ENCODE measurements at regions of chr5 and their contacts with region 1.

Region 1: GRCh38 chr5:150469718-150470469 is 20.4 kb upstream of the RPS14 start:
- DNase-seq: peak; percentile 80
- H3K4me3 ChIP-seq: no peak overlapping the region
- H3K27ac ChIP-seq: no peak overlapping the region
- H3K4me1 ChIP-seq: peaks cover 38% of the 10 kb centered on the region
- H3K27me3 ChIP-seq: no peaks in the 10 kb centered on the region
- CTCF ChIP-seq: no peak

Region 2: GRCh38 chr5:150357326-150358260 is 112.3 kb before region 1 on chr5 and contains the start of gene TCOF1:
- CTCF ChIA-PET with region 1: no interaction called
- dilution Hi-C with region 1: no loop called
- in situ Hi-C with region 1: no loop called
- intact Hi-C with region 1: no loop called
- DNase-seq: peak; percentile 96
- H3K4me3 ChIP-seq: peak within 1 kb of the TSS; percentile 83 to 88 (median 85)
- H3K27ac ChIP-seq: peak within 1 kb of the TSS; percentile 83
- H3K4me1 ChIP-seq: peaks cover 9% of the 10 kb centered on the region
- H3K27me3 ChIP-seq: no peaks in the 10 kb centered on the region
- CTCF ChIP-seq: no peak
- total RNA-seq, gene TCOF1: 17.7 to 70.4 TPM

Region 3: GRCh38 chr5:150449517-150450339 is 20.2 kb before region 1 on chr5 and contains the start of gene RPS14:
- CTCF ChIA-PET with region 1: no interaction called
- dilution Hi-C with region 1: no loop called
- in situ Hi-C with region 1: no loop called
- intact Hi-C with region 1: no loop called
- DNase-seq: peak; percentile 94
- H3K4me3 ChIP-seq: peak within 1 kb of the TSS; percentile 79 to 86 (median 79)
- H3K27ac ChIP-seq: peak within 1 kb of the TSS; percentile 88
- H3K4me1 ChIP-seq: peaks cover 17% of the 10 kb centered on the region
- H3K27me3 ChIP-seq: no peaks in the 10 kb centered on the region
- CTCF ChIP-seq: peak; percentile 80 to 86
- total RNA-seq, gene RPS14: 1,819 to 2,158 TPM

Region 4: DNA sequence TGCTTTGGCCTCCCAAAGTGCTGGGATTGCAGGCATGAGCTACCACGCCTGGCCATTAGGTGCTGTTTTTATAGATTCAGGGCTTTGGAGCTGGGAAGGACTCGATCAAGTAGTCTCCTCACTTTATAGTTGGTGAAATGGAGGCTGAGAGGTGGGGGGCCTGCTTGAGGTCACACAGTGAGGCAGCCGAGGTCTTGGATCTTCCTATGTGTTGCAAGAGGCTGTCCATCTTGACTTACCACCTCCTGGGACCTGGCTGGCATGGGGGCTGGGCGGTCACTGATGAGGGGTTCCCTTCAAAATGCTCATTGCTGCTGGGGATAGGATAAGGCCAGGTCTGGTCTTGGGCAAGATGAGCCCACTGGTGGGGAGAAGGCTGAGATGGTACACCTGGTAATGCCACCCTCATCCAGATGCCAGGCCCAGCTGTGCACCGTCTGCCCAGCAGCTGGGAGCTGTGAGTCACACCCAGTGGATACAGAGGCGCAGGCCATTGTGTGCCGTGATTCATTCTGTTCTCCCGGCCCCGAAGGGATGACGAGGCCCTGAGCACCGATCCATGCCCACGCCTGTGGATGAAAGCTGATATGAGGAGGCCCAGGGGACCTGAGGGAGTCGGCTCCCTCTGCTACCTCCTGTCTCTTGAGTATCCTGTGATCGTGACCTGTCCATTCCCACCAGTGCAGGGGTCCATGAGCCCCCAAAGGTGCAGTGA is 27.5 kb after region 1 on chr5:
- CTCF ChIA-PET with region 1: no interaction called
- dilution Hi-C with region 1: no loop called
- in situ Hi-C with region 1: no loop called
- intact Hi-C with region 1: loop called (anchors 1 kb)
- DNase-seq: peak; percentile 96
- H3K4me3 ChIP-seq: peak overlapping the region; percentile 22 to 41 (median 35)
- H3K27ac ChIP-seq: peak overlapping the region; percentile 77
- H3K4me1 ChIP-seq: peaks cover 71% of the 10 kb centered on the region
- H3K27me3 ChIP-seq: no peaks in the 10 kb centered on the region
- CTCF ChIP-seq: no peak

Region 5: GRCh38 chr5:150523472-150524350 is 53.8 kb after region 1 on chr5:
- CTCF ChIA-PET with region 1: no interaction called
- dilution Hi-C with region 1: no loop called
- in situ Hi-C with region 1: no loop called
- intact Hi-C with region 1: loop called (anchors 5 kb)
- DNase-seq: peak; percentile 39
- H3K4me3 ChIP-seq: no peak overlapping the region
- H3K27ac ChIP-seq: no peak overlapping the region
- H3K4me1 ChIP-seq: peaks cover 42% of the 10 kb centered on the region
- H3K27me3 ChIP-seq: no peaks in the 10 kb centered on the region
- CTCF ChIP-seq: peak; percentile 44 to 59

Region 6: DNA sequence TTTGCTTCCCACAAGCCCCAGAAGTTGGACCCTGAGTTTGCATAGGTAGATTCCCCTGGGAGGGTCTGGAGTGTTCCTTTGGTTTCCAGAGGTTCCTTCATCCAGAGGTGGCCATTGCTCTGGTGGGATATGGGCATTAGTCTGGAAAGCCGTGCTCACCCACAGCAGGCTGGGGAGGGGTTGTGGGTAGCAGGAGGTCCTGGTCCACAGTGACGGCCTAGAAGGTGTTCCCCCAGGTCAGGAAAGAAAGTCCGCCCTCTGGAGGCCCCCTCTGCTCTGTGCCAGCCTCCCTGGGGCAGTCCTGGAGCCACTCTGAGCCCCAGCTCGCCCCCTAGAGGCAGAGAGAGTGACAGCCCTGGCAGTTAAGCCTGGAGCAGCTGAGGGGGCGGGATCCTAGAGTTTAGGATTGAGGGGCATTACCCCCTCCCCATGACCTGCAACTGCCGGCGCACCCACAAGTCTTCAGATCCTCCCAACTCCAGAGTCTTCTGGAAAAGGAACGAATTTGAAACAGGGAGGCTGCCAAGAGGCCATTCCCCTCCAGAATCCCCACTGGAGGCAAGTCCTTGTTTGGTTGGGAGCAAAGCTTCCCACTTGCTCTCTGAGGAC is 74.8 kb after region 1 on chr5:
- CTCF ChIA-PET with region 1: no interaction called
- dilution Hi-C with region 1: no loop called
- in situ Hi-C with region 1: no loop called
- intact Hi-C with region 1: loop called (anchors 2 kb)
- DNase-seq: peak; percentile 44
- H3K4me3 ChIP-seq: no peak overlapping the region
- H3K27ac ChIP-seq: no peak overlapping the region
- H3K4me1 ChIP-seq: peaks cover 27% of the 10 kb centered on the region
- H3K27me3 ChIP-seq: no peaks in the 10 kb centered on the region
- CTCF ChIP-seq: peak; percentile 74 to 94

Region 7: DNA sequence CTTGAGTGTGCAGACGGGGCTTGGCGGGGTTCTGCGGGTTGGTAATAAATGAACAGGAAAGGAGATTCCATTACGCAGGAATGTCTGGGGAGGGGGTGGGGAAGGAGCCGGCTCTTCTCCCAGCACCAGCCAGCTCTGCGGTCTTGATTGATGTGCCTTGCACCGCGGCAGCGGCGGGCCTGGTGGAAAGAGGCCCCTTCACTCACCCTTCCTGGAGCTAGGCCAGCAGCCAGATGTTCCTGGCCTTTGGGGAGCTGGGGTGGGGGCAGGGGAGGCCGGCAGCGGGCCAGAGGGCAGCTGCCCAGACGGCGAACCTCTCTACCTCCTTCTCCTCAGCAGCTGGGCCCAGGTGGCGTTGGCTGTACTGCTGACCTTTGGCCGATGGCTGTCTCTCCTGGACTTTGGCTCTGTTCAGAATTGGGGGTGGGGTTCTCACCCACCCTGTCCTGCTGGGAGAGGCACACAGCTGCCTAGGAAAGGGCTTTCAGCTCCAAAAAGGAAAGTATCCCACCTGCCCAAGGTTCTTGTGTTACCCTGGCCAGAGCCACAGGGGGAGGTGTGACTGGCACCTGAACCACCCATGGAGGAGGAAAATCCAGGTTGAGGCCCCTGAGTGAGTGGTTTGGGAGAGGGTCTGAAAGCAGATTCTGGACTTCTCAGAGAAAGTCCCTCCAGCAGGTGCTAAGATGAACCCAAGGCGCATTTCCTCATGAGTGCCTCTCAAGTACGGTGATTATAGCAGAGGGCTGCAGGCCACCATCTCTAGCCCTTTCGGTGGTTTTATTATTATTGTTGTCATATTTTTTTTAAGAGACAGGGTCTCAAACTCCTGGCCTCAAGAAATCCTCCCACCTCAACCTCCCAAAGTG is 112.6 kb after region 1 on chr5:
- CTCF ChIA-PET with region 1: no interaction called
- dilution Hi-C with region 1: no loop called
- in situ Hi-C with region 1: no loop called
- intact Hi-C with region 1: no loop called
- DNase-seq: no peak
- H3K4me3 ChIP-seq: no peak overlapping the region
- H3K27ac ChIP-seq: no peak overlapping the region
- H3K4me1 ChIP-seq: no peaks in the 10 kb centered on the region
- H3K27me3 ChIP-seq: no peaks in the 10 kb centered on the region
- CTCF ChIP-seq: no peak